GM23248 (cell line): ENCODE measurements at regions of chr2 and their contacts with region 1.

Region 1: DNA sequence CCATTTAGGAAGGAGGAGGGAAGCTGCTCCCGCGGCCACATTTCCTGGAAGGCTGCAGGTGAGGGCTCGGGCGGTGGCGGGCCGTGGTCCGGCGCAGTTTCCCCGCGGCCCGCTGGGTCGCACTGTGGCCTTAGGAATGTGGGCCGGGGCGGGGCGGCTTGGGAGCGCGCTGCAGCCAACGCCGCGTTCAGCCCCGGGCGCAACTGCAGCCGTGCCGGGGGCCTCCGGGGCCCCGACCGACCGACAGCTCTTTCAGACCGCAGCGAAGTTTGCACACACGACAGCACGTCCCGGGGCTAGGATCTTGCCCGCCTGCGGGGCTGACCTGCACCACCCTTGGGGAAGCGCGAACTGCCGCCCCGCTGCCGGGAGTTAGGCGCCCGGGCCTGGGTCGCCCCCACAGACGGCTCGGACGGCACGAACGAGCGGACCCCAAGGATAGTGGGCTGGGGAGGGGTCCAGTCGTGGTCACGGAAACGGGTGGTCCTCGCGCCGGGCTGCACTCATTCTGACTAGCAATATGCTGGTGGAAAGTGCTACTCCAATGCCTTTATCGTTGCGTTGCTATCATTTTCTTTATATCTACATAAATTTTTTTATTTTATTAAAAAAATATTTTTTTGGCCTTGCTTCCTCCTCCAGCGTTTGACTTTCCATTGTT is 69.9 kb upstream of the DLX2 start:
- DNase-seq: peak; percentile 87
- H3K4me3 ChIP-seq: peak overlapping the region; percentile 79
- H3K27ac ChIP-seq: no peak overlapping the region
- H3K4me1 ChIP-seq: peaks cover 6% of the 10 kb centered on the region
- H3K27me3 ChIP-seq: no peaks in the 10 kb centered on the region

Region 2: GRCh38 chr2:172465417-172466334 is 293.0 kb after region 1 on chr2:
- in situ Hi-C with region 1: loop called (anchors 5 kb)
- DNase-seq: peak; percentile 94
- H3K4me3 ChIP-seq: peak overlapping the region; percentile 63
- H3K27ac ChIP-seq: peak overlapping the region; percentile 13; the same call in 1 of the 2 replicates
- H3K4me1 ChIP-seq: peaks cover 13% of the 10 kb centered on the region
- H3K27me3 ChIP-seq: no peaks in the 10 kb centered on the region

Region 3: DNA sequence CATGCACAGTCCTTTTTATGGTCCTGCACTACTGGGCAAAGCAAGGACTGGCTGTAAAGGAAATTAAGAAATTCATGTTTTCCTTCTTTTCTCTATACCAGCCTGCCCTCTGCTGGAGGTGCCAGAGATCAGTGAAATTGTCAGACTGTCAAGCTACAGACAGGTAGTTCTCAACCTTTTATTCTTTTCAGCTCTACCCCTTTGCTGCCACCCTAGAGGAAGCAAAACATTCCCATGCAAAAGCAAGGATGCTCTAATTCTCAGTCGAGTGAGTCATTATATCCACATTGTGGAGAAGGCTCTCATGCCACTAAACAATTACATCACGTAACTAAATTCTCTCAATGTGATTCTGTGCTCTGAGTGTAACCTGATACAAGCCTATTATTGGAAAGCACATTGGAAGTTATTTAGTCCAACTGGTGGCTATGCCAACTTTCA is 538.0 kb after region 1 on chr2:
- in situ Hi-C with region 1: loop called (anchors 25 kb)
- DNase-seq: peak; percentile 90
- H3K4me3 ChIP-seq: no peak overlapping the region
- H3K27ac ChIP-seq: no peak overlapping the region
- H3K4me1 ChIP-seq: peaks cover 13% of the 10 kb centered on the region
- H3K27me3 ChIP-seq: no peaks in the 10 kb centered on the region